A673 (cell line): ENCODE measurements at regions of chr1 and their contacts with region 1.

Region 1: GRCh38 chr1:211865180-211865579 is 34.6 kb upstream of the LPGAT1 start:
- DNase-seq: no peak
- H3K4me3 ChIP-seq: no peak overlapping the region
- H3K27ac ChIP-seq: no peak overlapping the region
- H3K4me1 ChIP-seq: no peaks in the 10 kb centered on the region
- H3K27me3 ChIP-seq: no peaks in the 10 kb centered on the region
- CTCF ChIP-seq: no peak

Region 2: DNA sequence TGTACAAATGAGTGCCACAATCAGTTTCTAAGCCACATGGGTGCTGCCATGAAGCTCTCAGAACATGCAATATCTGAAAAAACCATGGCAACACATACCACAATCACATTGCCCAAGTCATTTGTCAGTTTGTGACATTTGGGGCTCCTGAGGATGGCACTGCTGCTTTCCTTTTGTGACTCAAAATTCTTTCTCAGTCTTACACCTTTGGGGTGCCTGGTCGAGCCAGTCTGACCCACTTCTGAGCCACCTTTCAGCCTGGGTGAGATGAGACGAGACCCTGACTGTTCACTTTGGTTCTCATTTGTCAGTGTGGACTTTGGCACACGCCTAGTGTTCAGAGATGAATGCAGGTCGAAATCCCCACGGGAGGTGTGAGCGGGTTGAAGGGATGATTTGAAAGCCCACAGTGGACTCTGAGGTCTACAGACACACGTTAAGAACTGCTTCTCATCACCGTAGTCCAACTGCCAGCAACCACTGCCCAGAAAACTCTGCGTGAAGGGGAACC is 826.4 kb after region 1 on chr1:
- CTCF ChIA-PET with region 1: no interaction called
- POLR2A ChIA-PET with region 1: no interaction called
- intact Hi-C with region 1: loop called (anchors 5 kb)
- DNase-seq: no peak
- H3K4me3 ChIP-seq: no peak overlapping the region
- H3K27ac ChIP-seq: no peak overlapping the region
- H3K4me1 ChIP-seq: no peaks in the 10 kb centered on the region
- H3K27me3 ChIP-seq: no peaks in the 10 kb centered on the region
- CTCF ChIP-seq: no peak